ENCODE measurements at regions of chr7 and their contacts with region 1.

Region 1: DNA sequence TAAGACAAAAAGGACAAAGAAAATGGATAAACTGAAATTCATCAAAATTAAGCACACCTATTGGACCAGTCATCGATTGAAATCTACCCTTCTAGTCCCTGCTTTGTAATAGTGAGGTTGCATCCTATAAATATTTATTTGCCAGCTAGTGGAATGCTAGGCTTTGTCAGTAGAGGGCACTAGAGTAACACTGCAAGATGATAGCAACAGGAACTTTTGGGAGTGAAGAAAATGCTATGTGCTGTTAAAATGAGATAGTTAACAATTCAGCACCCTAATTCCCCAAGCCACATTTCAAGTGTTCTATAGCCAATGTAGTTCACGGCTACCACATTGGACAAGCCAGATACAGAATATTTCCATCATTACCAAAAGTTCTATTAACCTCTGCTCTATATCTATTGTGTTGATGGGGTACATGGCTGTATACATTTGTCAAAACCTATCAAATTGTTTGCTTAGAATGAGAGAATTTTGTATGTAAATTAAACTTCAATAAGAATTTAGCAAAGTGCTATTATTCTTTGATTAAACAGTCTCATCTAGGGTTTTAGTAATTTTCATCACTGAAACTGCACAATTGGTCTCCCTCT is 69.8 kb downstream of the LSMEM1 start:
- DNase-seq: peak; percentile 17
- H3K4me3 ChIP-seq: no peak overlapping the region
- CTCF ChIP-seq: peak; percentile 75

Region 2: DNA sequence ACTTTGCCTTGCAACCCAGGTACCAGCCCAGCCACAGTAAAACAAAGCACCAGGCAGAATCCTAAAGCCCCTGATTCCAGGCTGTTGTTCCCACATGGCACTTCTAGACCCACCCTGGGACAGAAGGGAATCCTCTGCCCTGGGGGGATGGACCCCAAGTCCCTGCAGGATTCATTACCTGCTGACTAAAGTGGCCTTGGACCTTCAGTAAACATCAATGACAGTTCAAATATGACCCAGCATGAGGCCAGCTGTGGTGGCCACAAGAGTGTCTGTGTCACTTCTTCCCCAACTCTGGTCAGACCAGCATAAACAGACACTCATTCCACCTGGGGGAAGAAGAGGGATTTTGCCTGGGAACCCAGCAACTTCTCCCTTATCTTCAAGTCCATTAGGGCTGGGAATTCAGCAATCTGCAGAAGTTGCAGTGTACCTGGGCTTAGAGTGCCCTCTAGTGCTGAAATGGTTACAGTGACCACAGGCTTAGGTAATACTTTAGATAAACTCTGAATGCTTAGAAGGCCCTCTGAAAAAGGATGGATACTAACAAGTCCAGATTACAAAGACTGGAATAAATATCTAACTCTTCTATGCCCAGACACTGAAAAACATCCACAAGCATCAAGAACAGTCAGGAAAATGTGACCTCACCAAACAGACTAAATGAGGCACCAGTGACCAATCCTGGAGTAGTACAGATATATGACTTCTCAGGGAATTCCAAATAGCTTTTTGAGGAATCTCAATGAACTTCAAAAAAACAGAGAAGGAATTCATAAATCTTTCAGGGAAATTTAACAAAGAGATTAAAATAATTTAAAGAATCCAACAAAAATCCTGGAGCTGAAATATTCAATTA is 348.1 kb after region 1 on chr7:
- CTCF ChIA-PET with region 1: interaction called, 22 read pairs
- POLR2A ChIA-PET with region 1: no interaction called
- DNase-seq: peak; percentile 14
- H3K4me3 ChIP-seq: no peak overlapping the region
- CTCF ChIP-seq: peak; percentile 84

Region 3: DNA sequence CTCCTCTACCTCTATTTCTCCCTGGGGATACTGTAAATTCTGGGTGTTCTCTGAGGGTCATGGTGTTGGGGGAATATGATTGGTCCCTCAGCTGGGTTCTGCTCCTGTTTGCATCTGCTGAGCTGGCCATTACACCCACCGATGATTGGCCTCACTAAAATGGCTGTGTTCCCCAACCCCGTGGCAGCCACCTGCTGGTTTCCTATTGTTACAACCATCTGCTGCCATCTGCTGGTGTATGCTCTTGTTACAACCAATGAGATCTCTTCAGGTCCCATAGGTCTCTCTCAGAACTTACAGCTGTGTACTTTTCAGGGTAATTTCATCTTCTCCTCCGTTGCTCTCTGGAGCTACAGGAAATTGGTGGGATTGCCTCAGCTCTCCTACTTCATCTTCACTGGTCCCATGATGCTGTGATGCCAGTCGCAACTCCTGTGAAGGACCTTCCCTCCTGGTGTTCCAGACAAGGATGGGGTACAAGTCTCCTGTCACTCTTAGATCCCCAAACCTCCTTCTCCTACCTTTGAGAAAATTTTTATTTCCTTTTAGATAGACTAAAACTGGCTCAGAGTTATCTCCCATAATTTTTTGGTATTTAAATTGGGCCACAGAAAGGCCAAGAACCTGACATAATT is 871.2 kb after region 1 on chr7:
- CTCF ChIA-PET with region 1: interaction called, 30 read pairs
- POLR2A ChIA-PET with region 1: no interaction called
- DNase-seq: peak; percentile 31
- H3K4me3 ChIP-seq: no peak overlapping the region
- CTCF ChIP-seq: peak; percentile 92

Measured in AG04449 (cell line).